ENCODE measurements at regions of chr22 and their contacts with region 1.

Region 1: GRCh38 chr22:24772493-24773181 is 1.9 kb downstream of the PIWIL3 start:
- DNase-seq: peak; percentile 66 to 67
- H3K4me3 ChIP-seq: no peak overlapping the region
- H3K4me1 ChIP-seq: no peaks in the 10 kb centered on the region
- H3K27me3 ChIP-seq: no peaks in the 10 kb centered on the region

Region 2: DNA sequence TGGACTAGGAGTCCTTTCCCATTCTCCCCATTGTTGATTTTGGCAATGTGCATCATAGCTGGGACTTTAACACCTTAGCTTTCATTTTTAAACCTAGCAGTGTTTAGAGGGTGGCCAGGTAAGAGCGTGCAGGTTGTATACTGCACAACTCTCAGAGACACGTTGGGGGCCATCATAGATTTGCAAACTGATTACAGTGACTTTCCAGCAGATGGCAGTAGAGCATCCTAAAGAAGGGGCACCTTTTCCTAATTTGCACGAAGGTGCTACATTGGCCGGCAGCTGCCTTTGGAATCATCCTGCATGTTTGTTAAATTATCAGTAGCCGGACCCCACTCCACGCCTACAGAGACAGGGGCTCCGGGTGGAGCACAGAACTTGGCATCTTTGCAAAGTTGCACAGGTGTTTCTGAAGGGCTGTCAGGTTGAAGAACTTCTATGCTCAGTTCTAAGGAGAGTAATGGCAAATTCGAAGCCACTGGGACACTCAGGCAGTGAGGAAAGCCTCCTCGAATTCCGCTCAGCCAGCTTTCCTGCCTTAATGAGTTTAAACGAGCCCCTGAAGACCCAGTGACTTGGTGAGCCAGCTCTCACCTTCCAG is 166.2 kb after region 1 on chr22:
- in situ Hi-C with region 1: no loop called
- DNase-seq: peak; percentile 54 to 64
- H3K4me3 ChIP-seq: no peak overlapping the region
- H3K4me1 ChIP-seq: no peaks in the 10 kb centered on the region
- H3K27me3 ChIP-seq: peaks cover 10% of the 10 kb centered on the region

Region 3: GRCh38 chr22:25048659-25049647 is 276.3 kb after region 1 on chr22:
- in situ Hi-C with region 1: loop called (anchors 10 kb)
- DNase-seq: peak; percentile 39 to 85
- H3K4me3 ChIP-seq: no peak overlapping the region
- H3K4me1 ChIP-seq: no peaks in the 10 kb centered on the region
- H3K27me3 ChIP-seq: no peaks in the 10 kb centered on the region

Region 4: DNA sequence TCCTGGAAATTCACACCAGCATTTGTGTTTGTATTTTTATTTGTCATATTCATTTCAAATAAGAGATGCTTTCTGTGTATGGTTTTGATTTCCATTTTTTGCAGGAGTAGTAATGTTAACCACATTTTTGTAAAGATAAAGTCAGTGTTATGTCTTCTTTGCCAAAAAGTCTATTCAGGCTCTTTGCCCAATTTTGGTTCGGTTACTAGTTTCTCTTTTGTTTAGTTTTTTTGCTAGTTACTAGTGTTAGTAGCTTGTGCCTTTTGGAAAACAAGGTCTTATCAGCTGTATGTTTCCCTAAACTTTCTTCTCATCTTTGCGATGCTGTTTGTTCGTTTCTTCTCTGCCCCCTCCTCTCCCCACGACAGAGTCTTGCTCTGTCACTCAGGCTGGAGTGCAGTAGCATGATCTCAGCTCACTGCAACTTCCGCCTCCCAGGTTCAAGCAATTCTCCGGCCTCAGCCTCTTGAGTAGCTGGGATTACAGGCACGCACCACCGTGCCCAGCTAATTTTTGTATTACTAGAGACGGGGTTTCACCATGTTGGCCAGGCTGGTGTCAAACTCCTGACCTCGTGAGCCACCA is 679.6 kb after region 1 on chr22:
- in situ Hi-C with region 1: no loop called
- DNase-seq: no peak
- H3K4me3 ChIP-seq: no peak overlapping the region
- H3K4me1 ChIP-seq: peaks cover 6% of the 10 kb centered on the region
- H3K27me3 ChIP-seq: no peaks in the 10 kb centered on the region